Aorta (tissue), 5 donors: ENCODE measurements at regions of chr5 and their contacts with region 1.

Region 1: DNA sequence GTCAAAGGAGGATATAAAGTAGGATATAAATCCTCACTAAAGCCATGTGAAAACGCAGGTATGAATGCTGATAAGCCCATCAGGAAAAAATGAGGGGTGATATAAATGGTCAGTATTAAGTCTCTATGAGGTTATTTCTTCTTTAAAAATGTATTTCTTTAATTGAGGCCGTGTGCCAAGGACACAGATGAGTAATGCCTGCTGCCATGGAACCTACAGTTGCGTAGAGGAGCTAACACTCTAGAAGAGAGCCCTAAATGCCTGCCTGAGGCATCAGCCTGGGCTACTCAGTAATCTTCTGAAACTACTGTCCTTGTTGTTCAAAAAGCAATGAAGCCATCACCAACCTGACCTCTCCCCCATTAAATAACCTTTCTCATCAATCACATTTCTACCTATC is 84.9 kb downstream of the KLHL3 start:
- DNase-seq: no peak
- ATAC-seq: no peak
- H3K4me3 ChIP-seq: no peak overlapping the region
- H3K27ac ChIP-seq: no peak overlapping the region
- H3K4me1 ChIP-seq: no peaks in the 10 kb centered on the region
- H3K27me3 ChIP-seq: no peaks in the 10 kb centered on the region

Region 2: GRCh38 chr5:137516341-137516740 is 134.7 kb before region 1 on chr5:
- intact Hi-C with region 1: no loop called
- DNase-seq: no peak
- ATAC-seq: no peak
- H3K4me3 ChIP-seq: no peak overlapping the region
- H3K27ac ChIP-seq: no peak overlapping the region
- H3K4me1 ChIP-seq: peaks cover 0 to 4% of the 10 kb centered on the region in 2 donors
- H3K27me3 ChIP-seq: no peaks in the 10 kb centered on the region

Region 3: GRCh38 chr5:138138949-138139780 is 488.1 kb after region 1 on chr5 and contains the start of gene NME5:
- intact Hi-C with region 1: loop called in 1 of 2 experiments (anchors 10 kb)
- DNase-seq: peak; percentile 68 to 83
- ATAC-seq: peak; percentile 74
- H3K4me3 ChIP-seq: peak within 1 kb of the TSS in 1 of 2 donors; percentile 47
- H3K27ac ChIP-seq: no peak within 1 kb of the TSS
- H3K4me1 ChIP-seq: no peaks in the 10 kb centered on the region
- H3K27me3 ChIP-seq: no peaks in the 10 kb centered on the region
- total RNA-seq, gene NME5: 0.58 to 2.1 TPM